Aorta (tissue), 5 donors: ENCODE measurements at regions of chr4 and their contacts with region 1.

Region 1: DNA sequence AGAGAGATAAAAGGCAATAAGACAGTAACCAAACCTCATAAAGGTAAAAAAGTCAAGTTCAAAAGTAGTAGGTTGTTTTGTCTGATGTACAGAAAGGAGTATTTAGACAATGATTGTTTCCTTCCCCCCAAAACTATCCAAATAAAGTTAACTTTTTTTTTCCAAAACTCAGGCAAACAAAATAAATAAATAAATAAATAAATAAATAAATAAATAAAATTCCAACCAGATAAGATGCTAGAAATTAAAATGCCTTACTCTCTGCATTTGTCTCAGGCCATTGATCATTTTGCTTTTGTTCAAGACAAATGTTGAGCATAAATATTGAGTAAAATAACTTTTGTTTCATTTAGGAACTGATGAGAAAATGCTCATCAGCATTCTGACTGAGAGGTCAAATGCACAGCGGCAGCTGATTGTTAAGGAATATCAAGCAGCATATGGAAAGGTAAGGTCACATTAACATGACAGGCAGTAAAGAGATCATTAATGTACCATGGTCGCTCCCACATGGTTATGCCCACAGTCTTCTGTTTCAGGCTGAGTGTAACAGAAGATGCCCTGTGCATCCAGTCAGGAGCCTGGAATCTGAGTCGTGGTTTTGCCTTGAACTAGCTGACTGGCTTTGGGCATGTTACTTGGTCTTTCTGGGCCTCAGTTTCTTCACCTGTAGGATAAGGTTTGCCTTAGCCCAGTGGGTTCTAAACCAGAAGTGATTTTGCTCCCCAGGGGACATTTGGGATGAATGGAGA is 27.3 kb downstream of the ANXA3 start:
- DNase-seq: no peak
- ATAC-seq: no peak
- H3K4me3 ChIP-seq: no peak overlapping the region
- H3K27ac ChIP-seq: no peak overlapping the region
- H3K4me1 ChIP-seq: no peaks in the 10 kb centered on the region
- H3K27me3 ChIP-seq: no peaks in the 10 kb centered on the region

Region 2: DNA sequence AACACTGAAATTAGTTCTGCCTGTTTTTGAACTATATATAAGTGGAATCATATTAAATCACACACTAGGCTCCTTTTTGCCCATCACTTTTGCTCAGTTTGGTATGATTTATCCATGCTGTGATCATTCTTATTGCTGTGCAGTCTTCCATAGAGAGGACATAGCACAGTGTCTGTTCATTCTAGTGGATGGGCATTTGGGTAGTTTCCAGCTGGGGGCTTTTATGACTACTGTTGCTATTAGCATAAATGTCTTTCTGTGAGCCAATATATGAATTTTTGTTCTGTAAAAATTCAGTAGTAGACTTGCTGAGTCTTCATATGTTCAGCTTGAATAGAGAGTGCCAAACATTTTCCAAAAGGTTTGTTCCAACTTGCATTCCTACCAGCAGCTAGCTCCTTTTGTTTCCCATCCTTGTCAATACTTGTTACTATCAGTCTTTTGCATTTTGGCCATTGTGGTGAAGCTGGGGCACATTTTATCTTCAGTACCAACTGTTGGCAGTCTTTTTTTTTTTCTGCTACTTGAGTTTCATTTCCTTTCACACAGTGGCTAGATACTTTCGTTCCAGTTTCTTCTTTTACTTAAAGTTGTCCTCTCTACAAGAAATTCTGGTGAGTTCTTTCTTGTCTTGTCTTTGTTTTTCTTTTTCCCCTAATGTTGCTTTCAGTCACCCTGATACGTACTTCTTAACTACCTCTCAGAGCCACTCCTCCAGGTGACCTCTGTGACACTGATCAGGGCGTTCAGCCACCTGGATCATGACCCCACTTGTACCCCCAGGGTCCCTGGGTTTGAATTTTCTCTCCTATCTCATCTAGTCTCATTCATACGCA is 59.7 kb after region 1 on chr4:
- intact Hi-C with region 1: no loop called
- DNase-seq: no peak
- ATAC-seq: no peak
- H3K4me3 ChIP-seq: no peak overlapping the region
- H3K27ac ChIP-seq: no peak overlapping the region
- H3K4me1 ChIP-seq: no peaks in the 10 kb centered on the region
- H3K27me3 ChIP-seq: no peaks in the 10 kb centered on the region

Region 3: DNA sequence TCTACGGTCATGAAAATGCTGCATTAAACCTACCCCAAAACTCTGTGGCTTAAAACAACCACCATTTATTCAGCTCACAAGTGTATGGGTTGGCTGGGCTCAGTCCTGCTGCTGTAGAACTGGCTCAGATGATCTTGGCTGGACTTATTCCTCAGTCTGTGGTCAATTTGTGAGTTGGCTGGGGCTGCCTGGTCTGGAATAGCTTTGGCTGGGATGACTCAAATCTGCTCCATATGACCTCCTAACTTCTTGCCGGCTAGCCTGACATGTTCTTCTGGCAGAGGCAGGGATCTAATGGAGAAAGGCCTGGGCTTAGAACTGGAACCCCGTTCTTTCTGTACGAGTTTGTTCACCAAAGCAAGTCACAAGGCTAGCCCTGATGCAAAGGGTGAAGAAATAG is 1828.4 kb after region 1 on chr4:
- intact Hi-C with region 1: loop called in 1 of 2 experiments (anchors 10 kb)
- DNase-seq: peak in 1 of 2 donors; percentile 53
- ATAC-seq: peak; percentile 84
- H3K4me3 ChIP-seq: no peak overlapping the region
- H3K27ac ChIP-seq: no peak overlapping the region
- H3K4me1 ChIP-seq: no peaks in the 10 kb centered on the region
- H3K27me3 ChIP-seq: peaks cover 0 to 2% of the 10 kb centered on the region in 2 donors